ENCODE measurements at regions of chr6 and their contacts with region 1.

Region 1: GRCh38 chr6:30821862-30822782 is 62.2 kb upstream of the DDR1 start:
- DNase-seq: peak; percentile 33 to 55 (median 47)
- H3K4me3 ChIP-seq: peak overlapping the region in 1 of 3 experiments; percentile 4
- H3K4me3 Mint-ChIP-seq: no peak overlapping the region
- H3K27ac ChIP-seq: peak overlapping the region in 1 of 2 donors; percentile 65
- H3K27ac Mint-ChIP-seq: peak overlapping the region; percentile 83 to 92 (median 87)
- H3K4me1 ChIP-seq: peaks cover 66 to 75% of the 10 kb centered on the region in 2 donors
- H3K4me1 Mint-ChIP-seq: peaks cover 80% of the 10 kb centered on the region
- H3K27me3 ChIP-seq: no peaks in the 10 kb centered on the region
- H3K27me3 Mint-ChIP-seq: peaks cover 0 to 3% (median 1%) of the 10 kb centered on the region in 3 donors
- CTCF ChIP-seq: peak; percentile 71

Region 2: GRCh38 chr6:30787954-30788353 is 34.2 kb before region 1 on chr6:
- intact Hi-C with region 1: loop called (anchors 5 kb)
- DNase-seq: peak; percentile 60 to 69 (median 62)
- H3K4me3 ChIP-seq: peak overlapping the region in 1 of 3 experiments; percentile 44
- H3K4me3 Mint-ChIP-seq: peak overlapping the region in 1 of 2 donors; percentile 51
- H3K27ac ChIP-seq: peak overlapping the region; percentile 55 to 81
- H3K27ac Mint-ChIP-seq: peak overlapping the region; percentile 85 to 96 (median 93)
- H3K4me1 ChIP-seq: peaks cover 73 to 82% of the 10 kb centered on the region in 2 donors
- H3K4me1 Mint-ChIP-seq: peaks cover 76% of the 10 kb centered on the region
- H3K27me3 ChIP-seq: no peaks in the 10 kb centered on the region
- H3K27me3 Mint-ChIP-seq: peaks cover 0 to 6% (median 0%) of the 10 kb centered on the region in 3 donors
- CTCF ChIP-seq: no peak